Posterior cingulate gyrus (tissue), 11 donors: ENCODE measurements at regions of chr19 and their contacts with region 1.

Region 1: DNA sequence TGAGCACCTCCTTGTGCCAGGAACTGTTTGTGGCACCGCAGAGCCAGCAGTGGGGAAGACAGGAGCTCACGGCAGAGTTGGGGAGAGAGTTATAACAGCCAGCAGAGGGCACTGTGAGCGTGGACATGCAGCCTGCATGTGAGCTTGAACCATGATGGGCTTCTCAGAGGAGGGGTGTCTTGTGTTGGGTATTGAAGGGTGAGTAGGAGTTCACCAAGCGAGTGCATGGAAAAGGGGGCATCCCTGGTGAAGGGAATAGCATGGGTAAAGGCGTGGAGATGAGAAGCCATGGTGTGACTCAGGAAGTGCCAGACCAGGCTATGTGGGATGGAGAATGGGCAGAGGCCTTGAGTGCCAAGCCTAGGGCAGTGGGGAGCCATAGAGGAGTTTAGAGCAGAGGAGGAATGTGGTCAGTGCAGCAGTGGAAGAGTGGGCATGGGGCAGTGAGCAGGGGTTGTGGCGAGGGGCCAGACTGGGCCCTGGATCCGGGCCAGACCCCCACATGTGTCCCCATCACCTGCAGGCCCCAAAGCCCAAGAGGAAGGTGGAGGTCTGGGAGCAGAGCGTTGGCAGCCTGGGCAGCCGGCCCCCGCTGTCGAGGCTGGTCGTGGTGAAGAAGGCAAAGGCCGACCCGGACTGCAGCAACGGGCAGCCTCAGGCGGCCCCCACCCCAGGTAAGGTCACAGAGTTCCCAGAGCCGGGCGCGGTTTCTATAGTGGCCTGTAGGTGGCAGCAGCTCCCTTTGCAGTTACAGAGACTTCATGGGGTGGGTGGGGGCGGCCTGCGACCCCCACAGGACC is 11.8 kb upstream of the SHD start:
- DNase-seq: peak in 8 of 10 donors; percentile 33 to 89 (median 47)

Region 2: DNA sequence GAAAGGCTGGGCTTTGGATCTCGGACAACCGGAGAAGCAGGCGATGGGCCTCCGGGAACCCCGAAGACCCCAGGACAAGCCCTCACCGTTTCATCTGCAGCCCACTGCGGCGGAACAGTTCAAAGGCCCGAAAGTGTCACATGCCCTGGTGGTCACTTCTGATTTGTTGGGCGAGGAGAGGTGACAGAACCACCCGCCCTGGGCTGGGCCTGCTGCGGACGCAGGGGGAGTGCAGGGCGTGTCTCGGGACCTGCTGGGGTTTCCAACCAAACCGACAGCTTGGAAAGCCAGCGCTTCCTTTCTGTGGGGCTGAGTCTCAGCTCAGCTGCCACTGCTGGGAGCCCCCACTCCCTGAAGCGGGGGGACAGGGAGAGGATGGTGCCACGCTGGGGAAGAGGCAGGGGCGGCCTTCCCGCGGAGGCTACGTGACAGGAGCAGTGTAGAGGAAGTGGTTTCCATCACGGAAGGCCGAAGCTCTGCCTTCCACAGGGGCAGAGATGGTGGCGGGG is 177.8 kb before region 1 on chr19:
- intact Hi-C with region 1: no loop called
- DNase-seq: no peak

Region 3: GRCh38 chr19:4304530-4305252 is 37.4 kb after region 1 on chr19 and contains the start of gene FSD1:
- intact Hi-C with region 1: no loop called
- DNase-seq: peak in 9 of 10 donors; percentile 40 to 95 (median 62)

Region 4: GRCh38 chr19:4328243-4328990 is 61.1 kb after region 1 on chr19:
- intact Hi-C with region 1: loop called (anchors 10 kb)
- DNase-seq: peak; percentile 94 to 100 (median 97)

Region 5: DNA sequence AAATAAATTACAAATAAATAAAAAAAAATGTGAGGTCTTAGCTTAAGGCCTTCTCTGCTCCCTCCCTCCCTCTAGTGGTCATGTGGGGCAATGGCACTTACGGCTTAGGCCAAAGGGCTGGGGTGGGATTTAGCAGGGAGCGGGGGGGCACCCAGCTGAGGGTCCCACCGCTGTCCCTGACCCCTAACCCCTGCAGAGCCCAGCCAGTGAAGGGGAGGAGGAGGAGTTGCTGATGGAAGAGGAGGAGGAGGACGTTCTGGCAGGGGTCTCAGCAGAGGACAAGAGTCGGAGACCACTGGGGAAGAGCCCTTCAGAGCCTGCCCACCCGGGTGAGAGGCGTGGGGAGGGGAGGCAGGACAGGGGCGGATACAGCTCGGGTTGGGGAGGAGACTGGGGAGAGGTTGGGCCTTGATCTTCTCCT is 85.4 kb after region 1 on chr19:
- intact Hi-C with region 1: loop called (anchors 2 kb)
- DNase-seq: peak in 4 of 10 donors; percentile 50 to 88 (median 70)

Region 6: GRCh38 chr19:4694209-4694987 is 427.1 kb after region 1 on chr19:
- intact Hi-C with region 1: no loop called
- DNase-seq: peak; percentile 31 to 95 (median 73)